ENCODE measurements at regions of chr4 and their contacts with region 1.

Region 1: DNA sequence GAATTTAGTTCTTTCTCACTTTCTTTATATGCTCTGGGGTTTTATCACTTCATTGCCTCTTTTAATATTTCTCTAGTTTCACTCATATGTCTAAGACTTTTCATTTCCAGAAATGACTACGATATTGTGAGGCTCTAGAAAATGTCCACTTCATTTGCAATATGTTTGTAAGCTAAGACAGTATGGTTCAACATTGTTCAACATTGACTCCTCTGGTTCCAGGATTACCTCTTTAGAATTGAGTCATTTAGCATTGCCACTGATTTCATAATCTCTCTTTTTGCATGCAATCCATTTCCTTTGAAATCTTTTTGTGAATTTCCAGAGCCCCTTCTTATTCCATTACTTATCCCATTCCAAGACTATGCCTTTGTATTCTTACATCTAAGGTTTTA is 32.3 kb downstream of the BBS12 start:
- DNase-seq: no peak
- ATAC-seq: peak; percentile 22; the same call in 2 of the 3 replicates
- H3K4me3 ChIP-seq: no peak overlapping the region
- H3K27ac ChIP-seq: peak overlapping the region; percentile 63; the same call in 1 of the 3 replicates
- H3K4me1 ChIP-seq: peaks cover 10 to 38% of the 10 kb centered on the region in 2 experiments; a peak in 3 of 5 replicates
- H3K27me3 ChIP-seq: no peaks in the 10 kb centered on the region
- CTCF ChIP-seq: no peak
- EP300 ChIP-seq: peak; percentile 62; the same call in 1 of the 2 replicates
- POLR2A ChIP-seq: no peak
- RAD21 ChIP-seq: no peak

Region 2: DNA sequence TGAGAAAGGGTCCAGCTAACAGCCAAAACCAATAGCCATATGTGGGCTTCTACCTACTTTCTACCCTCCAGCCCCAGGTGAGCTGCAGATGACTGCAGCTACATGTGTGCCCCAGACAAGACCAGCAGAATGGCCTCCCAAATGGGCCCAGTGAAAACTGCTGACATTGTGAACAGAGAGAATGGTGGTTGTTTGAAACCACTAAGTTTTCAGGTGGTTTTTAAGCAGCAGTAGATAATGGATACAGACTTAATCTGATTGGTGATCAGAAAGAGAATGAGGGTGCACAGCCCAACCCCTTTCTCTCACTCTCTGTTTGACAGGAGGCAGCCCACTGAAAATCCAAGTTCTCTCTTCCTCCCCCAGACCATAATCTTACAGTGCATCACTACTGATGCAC is 74.8 kb before region 1 on chr4:
- CTCF ChIA-PET with region 1: no interaction called
- POLR2A ChIA-PET with region 1: no interaction called
- in situ Hi-C with region 1: no loop called
- intact Hi-C with region 1: no loop called
- DNase-seq: no peak
- ATAC-seq: no peak
- H3K4me3 ChIP-seq: no peak overlapping the region
- H3K27ac ChIP-seq: no peak overlapping the region
- H3K4me1 ChIP-seq: peaks cover 4 to 40% of the 10 kb centered on the region in 2 experiments; a peak in 4 of 5 replicates
- H3K27me3 ChIP-seq: no peaks in the 10 kb centered on the region
- CTCF ChIP-seq: no peak
- EP300 ChIP-seq: no peak
- POLR2A ChIP-seq: no peak
- RAD21 ChIP-seq: no peak

Region 3: GRCh38 chr4:122798101-122798500 is 33.3 kb after region 1 on chr4:
- CTCF ChIA-PET with region 1: no interaction called
- POLR2A ChIA-PET with region 1: interaction called, 3 read pairs
- in situ Hi-C with region 1: no loop called
- intact Hi-C with region 1: loop called (anchors 2 kb)
- DNase-seq: peak; percentile 46 to 88 (median 64)
- ATAC-seq: peak; percentile 93
- H3K4me3 ChIP-seq: no peak overlapping the region
- H3K27ac ChIP-seq: peak overlapping the region; percentile 3; the same call in 1 of the 3 replicates
- H3K4me1 ChIP-seq: peaks cover 0 to 21% of the 10 kb centered on the region in 2 experiments; a peak in 4 of 5 replicates
- H3K27me3 ChIP-seq: no peaks in the 10 kb centered on the region; a peak in 1 of 5 replicates
- CTCF ChIP-seq: no peak
- EP300 ChIP-seq: 0 out of 2 replicates have a peak, but pooled peaks have one; percentile 3
- POLR2A ChIP-seq: no peak
- RAD21 ChIP-seq: no peak

Region 4: GRCh38 chr4:122827879-122828601 is 63.2 kb after region 1 on chr4:
- CTCF ChIA-PET with region 1: no interaction called
- POLR2A ChIA-PET with region 1: no interaction called
- in situ Hi-C with region 1: no loop called
- intact Hi-C with region 1: loop called (anchors 2 kb)
- DNase-seq: peak; percentile 47 to 67 (median 56)
- ATAC-seq: peak; percentile 74
- H3K4me3 ChIP-seq: peak overlapping the region; percentile 70
- H3K27ac ChIP-seq: peak overlapping the region; percentile 73
- H3K4me1 ChIP-seq: peaks cover 8 to 16% of the 10 kb centered on the region in 2 experiments; a peak in 4 of 5 replicates
- H3K27me3 ChIP-seq: no peaks in the 10 kb centered on the region
- CTCF ChIP-seq: no peak; a peak in 1 of 6 replicates
- EP300 ChIP-seq: no peak
- POLR2A ChIP-seq: no peak; the same call in 1 of the 2 replicates
- RAD21 ChIP-seq: no peak